Cardiac septum (tissue), 1 donor: ENCODE measurements at regions of chr1 and their contacts with region 1.

Region 1: GRCh38 chr1:154546264-154547063 is 12.0 kb downstream of the UBE2Q1 start:
- DNase-seq: no peak

Region 2: DNA sequence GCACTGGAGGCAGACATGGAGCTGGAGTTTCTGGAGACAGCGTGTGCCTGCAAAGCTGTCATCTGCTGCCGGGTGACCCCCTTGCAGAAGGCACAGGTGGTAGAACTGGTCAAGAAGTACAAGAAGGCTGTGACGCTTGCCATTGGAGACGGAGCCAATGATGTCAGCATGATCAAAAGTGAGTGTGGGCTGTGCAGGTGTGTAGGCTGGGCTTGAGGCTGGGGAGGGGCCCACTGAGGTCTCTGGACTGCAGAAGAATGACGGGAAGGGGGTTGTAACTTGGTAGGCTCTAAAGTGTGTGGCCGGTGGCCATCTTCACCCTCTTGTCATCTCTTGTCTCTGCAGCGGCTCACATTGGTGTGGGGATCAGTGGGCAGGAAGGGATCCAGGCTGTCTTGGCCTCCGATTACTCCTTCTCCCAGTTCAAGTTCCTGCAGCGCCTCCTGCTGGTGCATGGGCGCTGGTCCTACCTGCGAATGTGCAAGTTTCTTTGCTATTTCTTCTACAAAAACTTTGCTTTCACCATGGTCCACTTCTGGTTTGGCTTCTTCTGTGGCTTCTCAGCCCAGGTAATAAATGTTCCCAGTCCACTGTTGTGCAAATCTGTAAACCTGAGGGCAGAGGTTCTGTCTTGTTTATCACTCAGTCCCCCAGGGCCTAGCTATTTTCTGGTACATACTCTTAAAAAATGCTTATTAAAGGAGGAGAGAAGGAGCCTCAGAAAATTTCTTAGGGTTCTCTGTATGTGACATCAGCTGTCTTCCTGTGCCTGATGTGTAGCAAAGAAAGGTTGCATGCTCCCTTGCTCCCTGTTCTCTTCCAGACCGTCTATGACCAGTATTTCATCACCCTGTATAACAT is 201.3 kb before region 1 on chr1:
- intact Hi-C with region 1: loop called (anchors 10 kb)
- DNase-seq: no peak